ENCODE measurements at regions of chr9 and their contacts with region 1.

Region 1: DNA sequence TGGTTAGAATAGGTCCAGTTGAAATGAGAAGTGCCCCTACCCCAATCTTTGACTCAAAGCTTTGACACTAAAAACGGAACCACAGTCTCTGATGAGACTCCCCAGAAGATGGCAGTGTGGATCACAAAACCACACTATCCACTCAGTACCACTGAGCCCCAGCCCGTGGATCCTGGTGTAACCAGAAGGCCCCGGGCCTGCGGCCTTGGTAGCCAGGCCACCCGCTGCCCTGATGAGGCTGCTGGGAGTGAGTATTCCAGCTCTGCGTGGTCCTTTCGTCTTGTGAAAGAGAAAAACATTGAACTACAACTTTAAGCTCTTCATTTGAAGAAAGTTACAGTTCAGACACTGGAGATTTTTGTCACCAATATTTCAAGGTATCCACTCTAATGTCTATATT is 42.2 kb upstream of the FBP1 start:
- DNase-seq: peak; percentile 87
- H3K4me3 ChIP-seq: no peak overlapping the region; a peak in 1 of 4 replicates
- H3K27ac ChIP-seq: peak overlapping the region in 1 of 2 experiments; percentile 83; a peak in 2 of 4 replicates
- H3K4me1 ChIP-seq: peaks cover 0 to 35% of the 10 kb centered on the region in 2 experiments; a peak in 1 of 4 replicates
- H3K27me3 ChIP-seq: no peaks in the 10 kb centered on the region
- CTCF ChIP-seq: peak; percentile 81
- EP300 ChIP-seq: no peak
- RAD21 ChIP-seq: peak; percentile 94

Region 2: GRCh38 chr9:94593459-94594345 is 87.8 kb before region 1 on chr9 and contains the start of gene FBP2:
- CTCF ChIA-PET with region 1: no interaction called
- POLR2A ChIA-PET with region 1: no interaction called
- DNase-seq: no peak
- H3K4me3 ChIP-seq: no peak within 1 kb of the TSS
- H3K27ac ChIP-seq: no peak within 1 kb of the TSS
- H3K4me1 ChIP-seq: peaks cover 0 to 7% of the 10 kb centered on the region in 2 experiments; a peak in 1 of 4 replicates
- H3K27me3 ChIP-seq: no peaks in the 10 kb centered on the region
- CTCF ChIP-seq: no peak
- EP300 ChIP-seq: no peak
- RAD21 ChIP-seq: no peak
- polyA plus RNA-seq, gene FBP2: not detected in 2 replicates

Region 3: DNA sequence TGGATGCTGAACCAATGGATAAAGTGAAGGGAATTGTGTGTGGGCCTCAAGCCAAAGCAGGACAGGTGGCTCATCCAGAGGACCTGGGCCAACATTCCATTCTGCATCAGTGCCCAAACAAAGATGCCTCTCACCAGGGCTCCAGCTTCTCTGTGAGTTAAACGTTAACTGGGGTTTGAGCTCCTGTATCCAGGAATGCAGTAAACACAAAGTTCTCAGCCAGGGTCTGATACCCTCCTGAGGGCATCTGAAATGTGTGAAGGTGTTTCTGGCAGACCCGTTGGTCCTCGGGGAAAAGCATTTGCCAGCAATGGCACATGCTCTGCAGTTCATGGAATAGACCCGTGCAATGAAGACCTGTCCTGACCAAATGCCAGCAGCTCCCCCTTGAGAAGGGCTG is 11.1 kb after region 1 on chr9:
- CTCF ChIA-PET with region 1: interaction called, 41 read pairs
- POLR2A ChIA-PET with region 1: no interaction called
- DNase-seq: no peak
- H3K4me3 ChIP-seq: no peak overlapping the region
- H3K27ac ChIP-seq: peak overlapping the region in 1 of 2 experiments; percentile 93; a peak in 1 of 4 replicates
- H3K4me1 ChIP-seq: peaks cover 0 to 24% of the 10 kb centered on the region in 2 experiments; a peak in 1 of 4 replicates
- H3K27me3 ChIP-seq: no peaks in the 10 kb centered on the region
- CTCF ChIP-seq: no peak
- EP300 ChIP-seq: no peak
- RAD21 ChIP-seq: no peak

Region 4: DNA sequence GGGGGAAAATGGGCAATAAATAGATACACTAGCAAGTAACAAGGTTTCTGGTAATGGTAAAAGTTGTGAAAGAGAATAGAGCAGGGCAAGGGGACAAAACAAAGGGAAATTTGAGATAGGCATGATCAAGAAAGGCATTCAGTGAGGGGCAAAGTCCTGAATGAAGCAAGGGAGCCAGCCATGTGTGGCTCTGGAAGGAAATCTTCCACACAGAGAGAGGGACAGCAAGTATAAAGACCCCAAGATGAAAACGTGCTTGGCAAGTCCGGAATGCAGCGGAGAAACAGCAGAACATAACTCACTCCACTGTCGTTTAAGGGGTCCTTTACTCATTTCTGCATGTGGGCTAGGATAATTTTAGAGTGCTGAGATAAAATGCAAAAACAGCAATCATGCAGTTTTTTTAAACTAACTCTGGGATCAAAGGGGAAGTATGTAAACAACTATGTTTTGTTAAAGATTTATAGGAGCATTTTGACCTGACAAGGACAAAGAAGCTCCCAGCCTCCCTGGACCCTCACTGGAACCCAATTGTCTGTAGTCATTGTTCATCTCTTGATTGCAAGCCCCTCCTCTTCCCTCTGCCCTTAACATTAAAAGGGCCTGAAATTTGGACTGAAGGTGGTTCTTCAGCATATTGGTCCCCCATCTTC is 22.1 kb after region 1 on chr9:
- CTCF ChIA-PET with region 1: interaction called, 19 read pairs
- POLR2A ChIA-PET with region 1: interaction called, 3 read pairs
- DNase-seq: no peak
- H3K4me3 ChIP-seq: no peak overlapping the region
- H3K27ac ChIP-seq: peak overlapping the region in 1 of 2 experiments; percentile 98; a peak in 2 of 4 replicates
- H3K4me1 ChIP-seq: peaks cover 0 to 22% of the 10 kb centered on the region in 2 experiments; a peak in 2 of 4 replicates
- H3K27me3 ChIP-seq: no peaks in the 10 kb centered on the region
- CTCF ChIP-seq: no peak
- EP300 ChIP-seq: no peak
- RAD21 ChIP-seq: no peak

Region 5: DNA sequence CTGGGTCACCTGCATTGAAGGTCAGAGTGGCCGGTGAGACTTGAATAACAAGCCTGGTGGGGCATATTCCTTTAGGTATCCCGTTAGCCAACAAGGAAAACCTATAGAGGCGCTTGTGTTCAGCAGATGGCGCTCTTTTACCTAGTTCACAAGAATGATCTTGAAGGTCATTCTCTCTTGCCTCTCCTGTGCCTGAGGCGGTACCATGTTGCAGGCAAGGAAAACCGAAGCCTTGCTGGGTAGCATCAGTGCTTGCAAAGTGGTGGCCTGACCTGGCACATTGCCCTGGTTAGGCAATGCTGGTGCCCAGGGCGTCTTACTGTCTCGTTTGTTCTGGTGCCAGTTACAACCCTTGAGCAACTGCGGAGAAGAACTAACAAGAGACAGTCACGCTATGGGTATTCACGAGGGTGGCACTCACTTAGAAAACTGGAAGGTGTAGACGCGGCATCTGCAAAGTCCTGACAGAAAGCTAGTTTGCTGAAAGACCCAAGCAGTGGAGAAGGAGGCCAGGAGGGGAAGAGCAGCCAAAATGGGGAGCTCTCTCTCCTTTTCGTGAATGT is 101.7 kb after region 1 on chr9:
- CTCF ChIA-PET with region 1: interaction called, 36 read pairs
- POLR2A ChIA-PET with region 1: interaction called, 7 read pairs
- DNase-seq: peak; percentile 68
- H3K4me3 ChIP-seq: peak overlapping the region in 1 of 2 experiments; percentile 5; a peak in 1 of 4 replicates
- H3K27ac ChIP-seq: peak overlapping the region; percentile 93 to 97
- H3K4me1 ChIP-seq: peaks cover 8 to 40% of the 10 kb centered on the region in 2 experiments
- H3K27me3 ChIP-seq: no peaks in the 10 kb centered on the region
- CTCF ChIP-seq: peak; percentile 78
- EP300 ChIP-seq: peak in 1 of 2 experiments; percentile 82; a peak in 2 of 4 replicates
- RAD21 ChIP-seq: peak; percentile 92

Region 6: GRCh38 chr9:94913589-94913988 is 232.1 kb after region 1 on chr9:
- CTCF ChIA-PET with region 1: interaction called, 10 read pairs
- POLR2A ChIA-PET with region 1: no interaction called
- DNase-seq: no peak
- H3K4me3 ChIP-seq: no peak overlapping the region
- H3K27ac ChIP-seq: peak overlapping the region; percentile 80 to 96
- H3K4me1 ChIP-seq: peaks cover 25 to 78% of the 10 kb centered on the region in 2 experiments
- H3K27me3 ChIP-seq: no peaks in the 10 kb centered on the region
- CTCF ChIP-seq: no peak
- EP300 ChIP-seq: no peak
- RAD21 ChIP-seq: no peak

Region 7: DNA sequence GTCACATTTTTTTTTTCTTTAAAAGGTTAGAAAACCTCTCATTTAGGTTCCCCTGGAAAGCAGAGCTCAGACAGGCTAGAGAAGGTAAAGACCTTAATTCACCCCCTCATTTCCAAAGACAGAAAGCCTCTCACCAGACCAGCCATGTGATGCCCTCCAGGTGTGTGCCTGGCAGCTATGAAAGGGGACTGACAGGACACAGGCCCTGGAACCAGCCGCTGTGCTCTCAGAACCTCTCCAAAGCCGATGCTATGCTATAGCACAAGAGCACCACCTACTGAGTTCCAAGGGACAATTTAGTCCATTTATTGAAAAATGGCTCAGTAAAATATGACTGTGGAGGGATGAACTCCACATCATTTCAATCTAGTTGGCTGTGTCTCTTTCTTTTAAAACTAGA is 587.2 kb after region 1 on chr9:
- CTCF ChIA-PET with region 1: interaction called, 27 read pairs
- POLR2A ChIA-PET with region 1: no interaction called
- DNase-seq: peak; percentile 77
- H3K4me3 ChIP-seq: no peak overlapping the region
- H3K27ac ChIP-seq: peak overlapping the region in 1 of 2 experiments; percentile 75; a peak in 2 of 4 replicates
- H3K4me1 ChIP-seq: peaks cover 0 to 34% of the 10 kb centered on the region in 2 experiments; a peak in 2 of 4 replicates
- H3K27me3 ChIP-seq: no peaks in the 10 kb centered on the region
- CTCF ChIP-seq: peak; percentile 58
- EP300 ChIP-seq: peak in 1 of 2 experiments; percentile 97; a peak in 2 of 4 replicates
- RAD21 ChIP-seq: peak; percentile 96

Measured in SK-N-SH (cell line).